ENCODE measurements at regions of chr4 and their contacts with region 1.

Region 1: GRCh38 chr4:137524725-137525369 is 7.4 kb downstream of the PCDH18 start:
- DNase-seq: no peak
- H3K4me3 ChIP-seq: peak overlapping the region; percentile 72
- H3K27ac ChIP-seq: peak overlapping the region; percentile 51
- H3K4me1 ChIP-seq: peaks cover 15% of the 10 kb centered on the region
- H3K27me3 ChIP-seq: peaks cover 2% of the 10 kb centered on the region
- CTCF ChIP-seq: no peak

Region 2: GRCh38 chr4:137283737-137284136 is 241.1 kb before region 1 on chr4:
- intact Hi-C with region 1: loop called (anchors 10 kb)
- DNase-seq: no peak
- H3K4me3 ChIP-seq: no peak overlapping the region
- H3K27ac ChIP-seq: no peak overlapping the region
- H3K4me1 ChIP-seq: no peaks in the 10 kb centered on the region
- H3K27me3 ChIP-seq: no peaks in the 10 kb centered on the region
- CTCF ChIP-seq: peak; percentile 31

Region 3: GRCh38 chr4:137623013-137623412 is 98.2 kb after region 1 on chr4:
- intact Hi-C with region 1: no loop called
- DNase-seq: no peak
- H3K4me3 ChIP-seq: no peak overlapping the region
- H3K27ac ChIP-seq: no peak overlapping the region
- H3K4me1 ChIP-seq: peaks cover 7% of the 10 kb centered on the region
- H3K27me3 ChIP-seq: no peaks in the 10 kb centered on the region
- CTCF ChIP-seq: no peak

Region 4: DNA sequence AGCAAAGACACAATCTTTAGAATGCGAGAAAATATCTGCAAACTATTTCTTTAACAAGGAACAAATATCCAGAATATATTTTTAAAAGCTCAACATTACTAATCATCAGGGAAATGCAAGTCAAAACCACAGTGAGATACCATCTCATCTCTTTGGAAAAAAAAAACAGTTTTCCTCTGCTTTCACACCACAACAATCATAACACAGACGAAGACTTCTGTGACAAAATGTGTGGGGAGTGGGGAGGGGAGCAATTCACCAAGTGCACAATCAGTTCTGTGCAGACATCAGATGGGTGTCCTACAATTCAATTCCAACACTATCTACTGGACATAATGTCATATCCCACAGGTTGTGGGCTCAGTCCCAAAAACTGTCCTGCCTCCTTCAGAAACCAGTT is 1010.5 kb after region 1 on chr4:
- intact Hi-C with region 1: no loop called
- DNase-seq: no peak
- H3K4me3 ChIP-seq: no peak overlapping the region
- H3K27ac ChIP-seq: no peak overlapping the region
- H3K4me1 ChIP-seq: no peaks in the 10 kb centered on the region
- H3K27me3 ChIP-seq: no peaks in the 10 kb centered on the region
- CTCF ChIP-seq: no peak

Measured in left ventricle myocardium inferior (tissue), 1 donor.